Activated CD4-positive, alpha-beta memory T cell treated with anti-CD3 and anti-CD28 coated beads for 36 hours (primary cell): ENCODE measurements at regions of chr14 and their contacts with region 1.

Region 1: GRCh38 chr14:105369653-105370040 is 28.7 kb upstream of the TEX22 start:
- DNase-seq: no peak
- H3K4me3 Mint-ChIP-seq: no peak overlapping the region
- H3K27ac Mint-ChIP-seq: no peak overlapping the region
- H3K4me1 Mint-ChIP-seq: no peaks in the 10 kb centered on the region
- H3K27me3 Mint-ChIP-seq: no peaks in the 10 kb centered on the region

Region 2: GRCh38 chr14:105153271-105153731 is 216.3 kb before region 1 on chr14:
- CTCF ChIA-PET with region 1: no interaction called
- POLR2A ChIA-PET with region 1: no interaction called
- intact Hi-C with region 1: no loop called
- DNase-seq: no peak
- H3K4me3 Mint-ChIP-seq: no peak overlapping the region
- H3K27ac Mint-ChIP-seq: no peak overlapping the region
- H3K4me1 Mint-ChIP-seq: no peaks in the 10 kb centered on the region
- H3K27me3 Mint-ChIP-seq: no peaks in the 10 kb centered on the region

Region 3: DNA sequence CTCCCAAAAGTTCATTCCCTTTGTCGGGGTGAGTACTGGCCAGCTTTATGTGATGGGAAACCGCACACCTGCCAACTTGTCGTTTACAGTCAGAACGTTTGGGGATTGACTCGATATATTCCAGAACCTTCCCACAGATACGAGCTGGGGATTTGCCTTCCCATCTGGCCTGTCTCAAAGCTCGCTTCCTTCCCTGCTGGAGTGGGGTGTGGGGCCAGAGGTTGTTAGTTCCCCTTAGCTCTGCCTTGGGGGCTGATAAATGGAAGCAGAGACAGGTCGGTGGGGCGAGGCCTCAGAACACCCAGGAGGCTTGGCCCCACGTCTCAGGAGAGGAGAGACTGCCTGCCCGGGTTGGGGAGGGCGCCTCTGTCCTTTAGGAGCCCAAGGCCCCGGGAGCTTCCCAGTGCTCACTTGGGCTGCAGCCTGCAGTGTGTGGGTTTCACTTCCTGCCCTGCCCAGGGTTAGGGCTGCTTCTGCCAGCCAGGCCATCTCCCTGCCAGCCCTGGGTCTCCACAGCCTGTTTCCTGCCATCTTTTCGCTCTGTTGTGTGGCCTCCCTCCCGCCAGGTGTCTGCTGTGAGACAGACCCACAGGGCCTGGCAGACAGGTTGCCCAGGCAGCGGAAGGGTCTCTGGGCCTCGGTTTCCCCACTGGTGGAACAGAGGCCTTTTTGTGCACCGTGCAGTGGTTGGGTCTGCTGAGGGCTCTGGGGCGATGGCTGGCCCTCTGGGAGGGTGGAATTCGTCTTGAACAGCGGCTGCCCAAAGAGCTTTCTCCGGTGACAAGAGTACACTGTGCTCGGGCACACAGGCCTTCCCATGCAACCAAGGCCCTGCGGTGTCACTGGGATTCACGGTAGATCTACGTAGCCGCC is 20.6 kb after region 1 on chr14:
- CTCF ChIA-PET with region 1: interaction called, 11 read pairs
- POLR2A ChIA-PET with region 1: no interaction called
- intact Hi-C with region 1: no loop called
- DNase-seq: no peak
- H3K4me3 Mint-ChIP-seq: no peak overlapping the region
- H3K27ac Mint-ChIP-seq: no peak overlapping the region
- H3K4me1 Mint-ChIP-seq: no peaks in the 10 kb centered on the region
- H3K27me3 Mint-ChIP-seq: no peaks in the 10 kb centered on the region

Region 4: DNA sequence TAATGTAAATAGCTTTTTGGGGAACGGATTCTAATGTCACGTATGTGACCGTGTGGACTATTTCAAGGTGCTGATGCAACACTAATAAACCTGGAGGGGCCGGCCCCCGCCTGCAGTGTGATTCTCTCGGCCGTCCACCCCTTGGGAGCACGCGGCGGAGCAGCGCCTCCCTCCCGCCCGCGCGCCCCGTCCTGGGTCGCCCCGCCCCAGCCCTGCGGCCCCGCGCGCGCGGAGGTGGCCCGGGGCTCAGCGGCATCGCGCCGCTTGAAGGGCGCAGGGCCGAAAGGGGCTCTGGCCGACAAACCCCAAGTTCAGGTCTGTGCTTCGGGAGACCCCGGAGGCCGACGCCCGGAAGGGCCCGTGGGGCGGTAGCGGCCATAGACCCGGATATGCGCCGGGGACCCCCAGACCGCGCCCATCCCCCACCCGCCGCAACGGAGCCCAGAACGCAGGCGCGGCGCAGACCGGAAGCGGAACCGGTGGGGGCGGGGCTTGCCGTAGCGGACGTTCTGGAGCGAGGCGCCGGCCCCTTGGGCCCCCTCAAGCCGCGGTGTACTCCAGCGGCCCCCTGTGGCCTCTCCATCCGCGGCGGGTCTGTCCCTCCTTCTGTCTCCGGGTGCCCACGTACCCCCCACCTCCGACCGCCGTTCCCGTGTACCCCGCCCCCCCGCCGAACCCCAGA is 28.5 kb after region 1 on chr14 and contains the start of gene TEX22:
- CTCF ChIA-PET with region 1: interaction called, 11 read pairs
- POLR2A ChIA-PET with region 1: no interaction called
- intact Hi-C with region 1: no loop called
- DNase-seq: peak; percentile 91
- H3K4me3 Mint-ChIP-seq: peak within 1 kb of the TSS; percentile 89
- H3K27ac Mint-ChIP-seq: peak within 1 kb of the TSS; percentile 83
- H3K4me1 Mint-ChIP-seq: peaks cover 12% of the 10 kb centered on the region
- H3K27me3 Mint-ChIP-seq: no peaks in the 10 kb centered on the region
- total RNA-seq, gene TEX22: 0.83 to 0.90 TPM

Region 5: DNA sequence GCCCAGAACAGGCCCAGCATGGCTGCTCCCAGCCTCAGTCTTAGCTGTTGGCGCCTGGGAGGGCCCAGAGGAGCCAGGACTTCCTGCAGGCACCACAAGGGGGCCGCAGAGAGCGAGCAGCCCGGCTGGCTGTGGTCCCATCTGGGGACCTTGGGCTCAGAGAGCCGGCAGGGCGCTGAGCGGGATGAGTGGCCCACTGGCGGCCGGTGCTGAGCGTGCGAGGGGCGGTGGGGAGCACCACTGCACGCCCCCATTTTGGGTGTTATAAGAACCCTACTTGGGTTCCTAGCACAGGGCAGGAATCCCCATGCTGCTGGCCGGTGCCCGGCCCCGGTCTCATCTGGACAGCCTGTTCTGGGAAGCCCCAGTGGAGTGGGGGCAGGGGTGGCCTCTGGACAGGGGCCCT is 79.1 kb after region 1 on chr14:
- CTCF ChIA-PET with region 1: interaction called, 12 read pairs
- POLR2A ChIA-PET with region 1: no interaction called
- intact Hi-C with region 1: no loop called
- DNase-seq: peak; percentile 67
- H3K4me3 Mint-ChIP-seq: no peak overlapping the region
- H3K27ac Mint-ChIP-seq: no peak overlapping the region
- H3K4me1 Mint-ChIP-seq: no peaks in the 10 kb centered on the region
- H3K27me3 Mint-ChIP-seq: no peaks in the 10 kb centered on the region

Region 6: GRCh38 chr14:105480952-105481801 is 111.5 kb after region 1 on chr14:
- CTCF ChIA-PET with region 1: interaction called, 31 read pairs
- POLR2A ChIA-PET with region 1: interaction called, 3 read pairs
- intact Hi-C with region 1: no loop called
- DNase-seq: peak; percentile 95
- H3K4me3 Mint-ChIP-seq: peak overlapping the region; percentile 71
- H3K27ac Mint-ChIP-seq: peak overlapping the region; percentile 92
- H3K4me1 Mint-ChIP-seq: peaks cover 61% of the 10 kb centered on the region
- H3K27me3 Mint-ChIP-seq: peaks cover 14% of the 10 kb centered on the region

Region 7: GRCh38 chr14:105527661-105528581 is 158.3 kb after region 1 on chr14:
- CTCF ChIA-PET with region 1: interaction called, 16 read pairs
- POLR2A ChIA-PET with region 1: interaction called, 3 read pairs
- intact Hi-C with region 1: loop called (anchors 2 kb)
- DNase-seq: peak; percentile 86
- H3K4me3 Mint-ChIP-seq: peak overlapping the region; percentile 75
- H3K27ac Mint-ChIP-seq: peak overlapping the region; percentile 42
- H3K4me1 Mint-ChIP-seq: peaks cover 20% of the 10 kb centered on the region
- H3K27me3 Mint-ChIP-seq: peaks cover 2% of the 10 kb centered on the region